Activated T-helper 1 cell treated with anti-CD3 and anti-CD28 coated beads, Interleukin-12 subunit alpha, Interleukin-12 subunit beta, Interleukin-2, Interleukin-4 antibody, amounts not matched to agents 30 ng/mL and 10 ng/mL and 1 ng/mL, durations not matched to agents 14 hours and 24 hours and 36 hours (primary cell): ENCODE measurements at regions of chr16 and their contacts with region 1.

Region 1: GRCh38 chr16:8621572-8622314 is at the start of gene METTL22:
- DNase-seq: peak; percentile 90
- H3K4me3 Mint-ChIP-seq: peak within 1 kb of the TSS; percentile 99
- H3K27ac Mint-ChIP-seq: peak within 1 kb of the TSS; percentile 87
- H3K4me1 Mint-ChIP-seq: peaks cover 12% of the 10 kb centered on the region
- H3K27me3 Mint-ChIP-seq: peaks cover 8% of the 10 kb centered on the region
- total RNA-seq, gene METTL22: 30.0 and 32.0 TPM in 2 replicates

Region 2: GRCh38 chr16:8522757-8523156 is 99.0 kb before region 1 on chr16:
- intact Hi-C with region 1: no loop called
- DNase-seq: no peak
- H3K4me3 Mint-ChIP-seq: no peak overlapping the region
- H3K27ac Mint-ChIP-seq: no peak overlapping the region
- H3K4me1 Mint-ChIP-seq: no peaks in the 10 kb centered on the region
- H3K27me3 Mint-ChIP-seq: no peaks in the 10 kb centered on the region

Region 3: GRCh38 chr16:8674413-8675022 is 52.8 kb after region 1 on chr16 and contains the start of gene ABAT:
- intact Hi-C with region 1: loop called (anchors 1 kb)
- DNase-seq: peak; percentile 91
- H3K4me3 Mint-ChIP-seq: peak within 1 kb of the TSS; percentile 87
- H3K27ac Mint-ChIP-seq: peak within 1 kb of the TSS; percentile 81
- H3K4me1 Mint-ChIP-seq: peaks cover 20% of the 10 kb centered on the region
- H3K27me3 Mint-ChIP-seq: peaks cover 6% of the 10 kb centered on the region
- total RNA-seq, gene ABAT: 7.3 and 7.7 TPM in 2 replicates

Region 4: DNA sequence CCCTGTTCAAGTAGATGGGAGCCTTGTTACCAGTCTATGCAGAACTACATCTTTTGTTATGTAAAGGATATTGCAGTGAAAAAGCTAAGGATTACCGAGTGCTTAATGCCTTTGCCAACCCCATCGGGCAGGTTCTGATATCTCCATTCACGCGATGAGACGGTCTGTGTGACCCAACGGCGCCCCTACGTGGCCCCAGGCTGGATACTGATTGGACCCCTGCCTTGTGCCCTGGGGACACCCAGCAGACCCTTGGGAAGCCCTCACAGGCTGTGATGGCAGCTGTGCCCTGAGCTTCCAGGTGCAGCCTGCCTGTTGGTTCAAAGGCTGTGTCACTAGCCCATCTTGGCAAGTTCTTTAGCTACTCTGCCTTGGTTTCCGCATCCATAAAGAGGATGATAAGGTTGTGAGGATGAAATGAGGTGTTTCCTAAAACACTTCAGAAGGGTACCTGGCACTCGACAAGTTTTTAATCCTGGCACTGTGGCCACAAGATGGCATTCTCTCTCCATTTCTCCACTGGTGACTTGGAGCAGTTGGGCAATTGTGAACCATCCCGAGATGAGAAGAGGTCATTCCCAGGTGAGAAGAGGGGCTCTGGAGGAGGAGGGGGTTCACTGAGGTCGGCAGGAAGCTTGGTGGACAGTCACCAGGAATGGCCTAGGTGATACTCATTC is 503.3 kb after region 1 on chr16:
- intact Hi-C with region 1: loop called (anchors 5 kb)
- DNase-seq: no peak
- H3K4me3 Mint-ChIP-seq: no peak overlapping the region
- H3K27ac Mint-ChIP-seq: peak overlapping the region; percentile 14
- H3K4me1 Mint-ChIP-seq: peaks cover 52% of the 10 kb centered on the region
- H3K27me3 Mint-ChIP-seq: no peaks in the 10 kb centered on the region